HepG2 (cell line): ENCODE measurements at regions of chr14 and their contacts with region 1.

Region 1: DNA sequence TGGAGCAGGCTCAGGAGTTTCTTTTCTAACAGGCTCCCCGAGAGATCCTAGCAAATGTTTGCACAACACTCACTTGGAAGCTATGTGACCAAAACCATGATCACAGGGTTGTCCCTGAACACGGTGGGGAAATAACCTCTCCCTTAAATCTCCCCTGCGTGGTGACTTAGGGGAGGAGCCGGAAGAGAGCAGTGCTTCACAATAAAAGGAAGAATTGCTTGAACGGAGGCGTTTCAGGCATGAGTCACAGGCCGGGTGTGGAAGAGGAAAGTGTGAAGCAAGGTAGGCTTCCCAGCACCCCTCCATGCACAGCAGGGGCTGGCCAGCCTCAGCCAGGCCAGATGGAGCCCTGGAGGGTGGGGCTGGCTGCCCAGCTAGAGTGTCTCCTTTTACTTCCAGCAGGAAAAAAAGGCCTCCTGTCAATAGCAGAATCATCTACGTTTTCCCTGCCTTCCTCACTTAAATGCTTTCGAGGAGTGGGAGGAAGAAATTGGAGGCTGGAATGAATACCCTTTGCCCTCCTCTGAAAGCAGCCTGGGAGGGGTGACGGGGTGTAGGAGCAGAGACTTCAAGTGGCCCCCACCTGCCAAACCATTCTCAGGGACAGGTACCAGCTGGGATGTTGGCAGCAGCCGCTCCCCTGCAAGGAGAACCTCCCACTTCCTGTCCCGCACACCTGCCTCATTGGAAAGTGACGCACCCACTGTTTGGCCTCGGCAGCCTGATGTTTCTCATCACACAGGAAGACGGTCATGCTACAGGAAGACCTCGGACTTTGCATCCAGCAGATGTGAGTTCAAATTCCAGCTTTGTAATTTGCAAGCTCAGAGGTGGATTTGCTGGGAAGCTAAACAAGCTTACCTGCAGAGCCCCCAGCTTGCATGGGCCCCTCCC is 30.1 kb upstream of the PPP2R5C start:
- DNase-seq: peak; percentile 90
- ATAC-seq: peak; percentile 85
- H3K4me3 ChIP-seq: peak overlapping the region in 2 of 3 experiments; percentile 2 to 49; a peak in 4 of 6 replicates
- H3K27ac ChIP-seq: peak overlapping the region; percentile 83
- H3K4me1 ChIP-seq: peaks cover 87% of the 10 kb centered on the region
- H3K27me3 ChIP-seq: peaks cover 2 to 10% of the 10 kb centered on the region in 2 experiments; a peak in 3 of 5 replicates
- CTCF ChIP-seq: peak; percentile 46
- EP300 ChIP-seq: peak in 1 of 2 experiments; percentile 77; a peak in 2 of 4 replicates
- POLR2A ChIP-seq: peak in 1 of 2 experiments; percentile 50; a peak in 1 of 4 replicates
- RAD21 ChIP-seq: no peak

Region 2: GRCh38 chr14:101719708-101720107 is 11.7 kb before region 1 on chr14:
- CTCF ChIA-PET with region 1: no interaction called
- POLR2A ChIA-PET with region 1: interaction called, 10 read pairs
- in situ Hi-C with region 1: no loop called
- intact Hi-C with region 1: no loop called
- DNase-seq: peak; percentile 33
- ATAC-seq: peak; percentile 57
- H3K4me3 ChIP-seq: peak overlapping the region in 1 of 3 experiments; percentile 51; a peak in 3 of 6 replicates
- H3K27ac ChIP-seq: no peak overlapping the region
- H3K4me1 ChIP-seq: peaks cover 42% of the 10 kb centered on the region
- H3K27me3 ChIP-seq: peaks cover 0 to 15% of the 10 kb centered on the region in 2 experiments; a peak in 3 of 5 replicates
- CTCF ChIP-seq: no peak
- EP300 ChIP-seq: no peak
- POLR2A ChIP-seq: no peak
- RAD21 ChIP-seq: no peak

Region 3: DNA sequence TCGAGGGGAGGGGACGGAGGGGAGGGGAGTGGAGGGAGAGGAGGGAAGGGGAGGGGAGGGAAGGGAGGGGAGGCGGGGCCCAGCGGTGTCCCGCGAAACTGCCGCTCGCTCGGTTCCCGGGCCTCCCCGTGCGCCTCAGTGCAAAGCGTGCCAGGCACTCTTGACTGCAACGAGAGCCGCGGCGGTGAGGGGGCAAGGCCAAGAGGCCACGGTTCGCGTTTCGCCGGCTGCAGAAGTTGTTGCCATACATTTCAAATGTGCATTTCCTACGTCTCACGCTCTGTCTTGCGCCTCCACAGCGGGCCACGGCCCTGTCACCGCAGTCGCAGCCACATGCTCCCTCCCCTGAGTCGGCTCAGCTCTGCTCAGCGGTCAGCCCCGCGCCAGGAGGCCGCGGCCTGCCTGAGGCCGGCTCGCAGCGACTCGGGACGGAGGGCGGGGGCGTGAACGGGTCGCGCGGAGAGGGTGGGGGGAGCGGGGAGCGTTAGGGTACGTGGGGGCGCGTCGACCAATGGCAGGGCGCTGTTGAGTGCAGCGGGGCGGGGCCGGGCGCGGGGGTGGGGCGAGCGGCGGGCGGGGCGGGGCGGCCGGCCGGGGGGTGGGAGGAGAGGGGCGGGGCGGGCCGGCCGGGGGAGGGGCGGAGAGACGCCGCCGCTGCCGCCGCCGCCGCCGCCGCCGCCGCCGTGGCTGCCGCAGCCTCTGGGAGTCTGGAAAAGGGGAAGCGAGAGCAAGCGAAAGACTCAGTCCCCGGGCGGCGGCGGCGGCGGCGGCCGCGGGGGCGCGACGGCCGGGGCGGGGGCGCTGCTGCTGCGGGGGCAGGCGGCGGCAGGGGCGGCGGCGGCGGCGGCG is 29.8 kb after region 1 on chr14 and contains the start of gene PPP2R5C:
- CTCF ChIA-PET with region 1: no interaction called
- POLR2A ChIA-PET with region 1: interaction called, 16 read pairs
- in situ Hi-C with region 1: no loop called
- intact Hi-C with region 1: no loop called
- DNase-seq: peak; percentile 76
- ATAC-seq: peak; percentile 90
- H3K4me3 ChIP-seq: peak within 1 kb of the TSS; percentile 83 to 97 (median 88)
- H3K27ac ChIP-seq: peak within 1 kb of the TSS; percentile 97
- H3K4me1 ChIP-seq: peaks cover 43% of the 10 kb centered on the region
- H3K27me3 ChIP-seq: peaks cover 2 to 26% of the 10 kb centered on the region in 2 experiments; a peak in 2 of 5 replicates
- CTCF ChIP-seq: no peak
- EP300 ChIP-seq: no peak
- POLR2A ChIP-seq: peak; percentile 74 to 87
- RAD21 ChIP-seq: peak; percentile 38; the same call in 1 of the 2 replicates
- total RNA-seq, gene PPP2R5C: 74.3 and 94.8 TPM in 2 replicates